WTC11 (cell line): ENCODE measurements at regions of chr10 and their contacts with region 1.

Region 1: GRCh38 chr10:97999066-97999922 is 31.1 kb downstream of the CRTAC1 start:
- DNase-seq: peak; percentile 28
- ATAC-seq: peak; percentile 58; the same call in 1 of the 2 replicates
- H3K4me3 Mint-ChIP-seq: no peak overlapping the region
- H3K27ac Mint-ChIP-seq: no peak overlapping the region
- H3K4me1 Mint-ChIP-seq: peaks cover 7% of the 10 kb centered on the region
- H3K27me3 Mint-ChIP-seq: peaks cover 3% of the 10 kb centered on the region
- CTCF ChIP-seq: no peak

Region 2: GRCh38 chr10:97974526-97975525 is 24.5 kb before region 1 on chr10:
- CTCF ChIA-PET with region 1: no interaction called
- POLR2A ChIA-PET with region 1: interaction called, 14 read pairs
- DNase-seq: peak; percentile 43
- ATAC-seq: peak; percentile 70
- H3K4me3 Mint-ChIP-seq: peak overlapping the region; percentile 71
- H3K27ac Mint-ChIP-seq: no peak overlapping the region
- H3K4me1 Mint-ChIP-seq: peaks cover 24% of the 10 kb centered on the region
- H3K27me3 Mint-ChIP-seq: peaks cover 43% of the 10 kb centered on the region
- CTCF ChIP-seq: no peak